ENCODE measurements at regions of chr5 and their contacts with region 1.

Region 1: DNA sequence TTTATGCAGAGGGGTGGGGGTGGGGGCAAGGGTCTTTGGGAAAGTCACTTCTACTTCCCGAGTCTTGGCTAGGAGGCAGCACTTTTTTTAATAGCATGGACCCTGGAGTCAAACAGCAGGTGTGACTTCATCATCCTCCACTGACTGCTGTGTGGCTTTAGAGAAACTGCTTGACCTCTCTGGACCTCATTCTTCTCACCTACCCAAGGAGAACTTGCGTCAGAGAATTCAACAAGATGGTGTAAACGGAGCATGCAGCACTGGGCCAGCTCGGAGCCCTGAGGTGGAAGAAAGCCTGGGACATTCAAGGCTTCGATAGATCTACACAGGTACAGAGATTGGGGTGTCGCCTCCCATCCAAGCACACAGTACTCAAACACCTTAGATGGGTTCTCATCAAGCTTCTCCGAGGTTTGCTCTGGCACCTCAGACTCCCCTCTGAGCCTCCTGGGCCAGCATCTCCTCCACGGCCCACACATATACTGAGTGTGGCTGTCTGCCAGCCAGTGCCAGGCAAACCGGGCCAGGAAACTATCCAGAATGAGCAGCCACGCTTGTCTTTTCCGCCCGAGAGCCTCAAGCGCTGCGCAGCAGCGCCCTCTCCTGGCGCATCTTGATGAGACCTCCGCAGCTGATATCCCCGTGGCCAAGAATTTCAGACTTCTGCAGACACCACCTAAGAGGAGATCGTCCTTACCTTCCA is 4.6 kb upstream of the SLC25A48 start:
- DNase-seq: peak; percentile 36 to 86
- H3K4me3 ChIP-seq: no peak overlapping the region
- H3K27ac ChIP-seq: no peak overlapping the region
- H3K4me1 ChIP-seq: peaks cover 0 to 4% (median 1%) of the 10 kb centered on the region in 4 experiments; a peak in 2 of 7 replicates
- H3K27me3 ChIP-seq: peaks cover 8 to 32% (median 23%) of the 10 kb centered on the region in 4 experiments
- CTCF ChIP-seq: peak in 2 of 3 experiments; percentile 81 to 93; a peak in 3 of 4 replicates
- EP300 ChIP-seq: no peak
- POLR2A ChIP-seq: no peak
- RAD21 ChIP-seq: peak; percentile 88 to 97

Region 2: DNA sequence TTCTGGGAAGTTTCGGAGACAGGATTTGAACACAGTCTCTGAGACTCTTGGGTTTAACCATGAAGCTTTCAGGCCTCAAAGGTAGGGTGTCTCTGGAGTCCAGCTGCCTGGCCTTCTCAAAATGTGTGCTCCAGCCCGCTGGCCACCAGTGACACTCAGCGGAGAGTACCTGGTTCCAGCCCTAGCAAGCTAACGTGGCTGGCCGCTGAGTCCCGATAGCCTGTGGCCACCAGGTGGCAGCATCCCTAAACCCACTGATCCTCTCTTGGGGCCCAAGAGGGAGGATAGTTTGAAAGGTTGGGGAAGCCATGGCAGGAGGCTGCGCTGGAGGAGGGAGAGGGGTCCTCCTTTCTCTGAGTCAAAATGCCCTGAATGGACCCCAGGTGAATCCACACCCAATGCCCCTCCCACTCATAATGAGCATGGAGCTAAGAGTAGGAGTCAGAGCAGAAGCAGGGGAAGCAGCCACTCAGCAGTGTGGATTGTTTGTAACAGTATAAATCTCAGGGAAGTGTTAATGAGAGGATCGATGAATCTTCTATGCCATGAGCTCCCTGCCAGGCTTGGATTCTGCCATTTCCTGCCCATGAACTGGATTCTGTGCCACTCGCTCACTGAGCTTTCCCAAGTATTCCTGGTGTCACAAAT is 372.3 kb before region 1 on chr5:
- CTCF ChIA-PET with region 1: interaction called, 50 read pairs
- POLR2A ChIA-PET with region 1: no interaction called
- DNase-seq: peak; percentile 25 to 90
- H3K4me3 ChIP-seq: no peak overlapping the region
- H3K27ac ChIP-seq: no peak overlapping the region
- H3K4me1 ChIP-seq: no peaks in the 10 kb centered on the region
- H3K27me3 ChIP-seq: peaks cover 0 to 14% (median 4%) of the 10 kb centered on the region in 4 experiments; a peak in 4 of 7 replicates
- CTCF ChIP-seq: peak; percentile 88 to 98 (median 96)
- EP300 ChIP-seq: no peak
- POLR2A ChIP-seq: no peak
- RAD21 ChIP-seq: peak; percentile 65 to 79

Region 3: DNA sequence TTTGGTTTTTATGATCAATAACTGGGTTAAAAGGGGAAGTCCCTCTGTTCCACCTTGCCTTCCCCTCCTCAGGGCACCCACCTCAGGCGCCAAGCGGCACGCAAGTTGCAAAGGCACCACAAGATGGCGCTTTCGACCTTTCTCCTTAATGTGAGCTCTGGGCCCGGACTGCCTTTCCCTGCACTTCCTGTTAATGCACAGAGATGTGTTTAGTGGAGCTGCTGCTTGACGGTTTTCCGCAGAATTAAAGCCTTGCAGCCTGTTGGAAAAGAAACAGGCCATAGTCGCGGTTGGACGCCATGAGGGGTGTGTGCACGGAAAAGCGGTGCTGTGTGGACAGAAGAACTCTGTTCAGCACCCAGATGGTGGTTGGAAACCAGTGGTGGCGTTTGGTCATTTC is 269.0 kb before region 1 on chr5:
- CTCF ChIA-PET with region 1: interaction called, 335 read pairs
- POLR2A ChIA-PET with region 1: no interaction called
- DNase-seq: peak in 1 of 2 experiments; percentile 92
- H3K4me3 ChIP-seq: 0 out of 8 replicates have a peak overlapping the region, but pooled peaks of 1 of the 4 experiments have one; percentile 15
- H3K27ac ChIP-seq: no peak overlapping the region
- H3K4me1 ChIP-seq: peaks cover 0 to 21% (median 8%) of the 10 kb centered on the region in 4 experiments; a peak in 6 of 7 replicates
- H3K27me3 ChIP-seq: no peaks in the 10 kb centered on the region; a peak in 1 of 7 replicates
- CTCF ChIP-seq: peak; percentile 91 to 92 (median 91)
- EP300 ChIP-seq: no peak
- POLR2A ChIP-seq: no peak
- RAD21 ChIP-seq: peak; percentile 95 to 96

Region 4: GRCh38 chr5:135750506-135750905 is 79.3 kb before region 1 on chr5:
- CTCF ChIA-PET with region 1: interaction called, 14 read pairs
- POLR2A ChIA-PET with region 1: no interaction called
- DNase-seq: no peak
- H3K4me3 ChIP-seq: no peak overlapping the region
- H3K27ac ChIP-seq: no peak overlapping the region
- H3K4me1 ChIP-seq: no peaks in the 10 kb centered on the region
- H3K27me3 ChIP-seq: no peaks in the 10 kb centered on the region
- CTCF ChIP-seq: peak; percentile 59 to 71 (median 64)
- EP300 ChIP-seq: no peak
- POLR2A ChIP-seq: no peak
- RAD21 ChIP-seq: peak; percentile 18 to 40; a peak in 2 of 4 replicates

Region 5: GRCh38 chr5:135843571-135844337 is 13.9 kb after region 1 on chr5:
- CTCF ChIA-PET with region 1: interaction called, 19 read pairs
- POLR2A ChIA-PET with region 1: interaction called, 3 read pairs
- DNase-seq: no peak
- H3K4me3 ChIP-seq: no peak overlapping the region
- H3K27ac ChIP-seq: no peak overlapping the region
- H3K4me1 ChIP-seq: no peaks in the 10 kb centered on the region
- H3K27me3 ChIP-seq: no peaks in the 10 kb centered on the region
- CTCF ChIP-seq: no peak
- EP300 ChIP-seq: no peak
- POLR2A ChIP-seq: no peak
- RAD21 ChIP-seq: no peak

Region 6: GRCh38 chr5:135871268-135871915 is 41.6 kb after region 1 on chr5:
- CTCF ChIA-PET with region 1: interaction called, 21 read pairs
- POLR2A ChIA-PET with region 1: no interaction called
- DNase-seq: no peak
- H3K4me3 ChIP-seq: no peak overlapping the region
- H3K27ac ChIP-seq: no peak overlapping the region
- H3K4me1 ChIP-seq: no peaks in the 10 kb centered on the region
- H3K27me3 ChIP-seq: no peaks in the 10 kb centered on the region; a peak in 1 of 7 replicates
- CTCF ChIP-seq: no peak
- EP300 ChIP-seq: no peak
- POLR2A ChIP-seq: no peak
- RAD21 ChIP-seq: no peak

Region 7: DNA sequence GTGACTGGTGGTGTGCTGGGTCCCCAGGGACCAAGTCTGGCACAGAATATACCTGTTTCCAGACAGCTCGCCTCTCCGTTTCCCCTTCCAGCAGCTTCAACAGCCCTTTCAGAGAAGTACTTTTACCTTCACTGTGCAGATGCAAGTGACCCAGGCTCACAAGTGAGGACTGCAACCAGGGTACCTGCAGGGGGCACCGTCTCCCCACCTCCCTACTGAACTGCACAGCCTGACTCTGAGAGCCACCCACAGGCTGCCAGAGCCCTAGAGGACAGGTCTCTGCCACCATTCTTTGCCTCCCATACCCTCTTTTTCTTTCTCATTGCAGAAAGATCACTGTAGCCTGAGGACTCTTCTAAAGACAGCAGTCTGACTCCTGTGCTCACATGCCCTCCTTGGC is 50.4 kb after region 1 on chr5:
- CTCF ChIA-PET with region 1: interaction called, 14 read pairs
- POLR2A ChIA-PET with region 1: no interaction called
- DNase-seq: peak; percentile 38 to 74
- H3K4me3 ChIP-seq: no peak overlapping the region
- H3K27ac ChIP-seq: no peak overlapping the region
- H3K4me1 ChIP-seq: peaks cover 3 to 5% (median 4%) of the 10 kb centered on the region in 4 experiments; a peak in 6 of 7 replicates
- H3K27me3 ChIP-seq: no peaks in the 10 kb centered on the region
- CTCF ChIP-seq: peak; percentile 76 to 84 (median 80)
- EP300 ChIP-seq: no peak
- POLR2A ChIP-seq: no peak
- RAD21 ChIP-seq: peak; percentile 68 to 70

Measured in H1 (cell line).